GM12878 (cell line): ENCODE measurements at regions of chr14 and their contacts with region 1.

Region 1: GRCh38 chr14:94056579-94057308 is 24.3 kb downstream of the DDX24 start:
- DNase-seq: peak; percentile 37
- ATAC-seq: peak; percentile 81
- H3K4me3 ChIP-seq: no peak overlapping the region
- H3K27ac ChIP-seq: peak overlapping the region; percentile 43; the same call in 1 of the 2 replicates
- H3K4me1 ChIP-seq: peaks cover 26% of the 10 kb centered on the region
- H3K27me3 ChIP-seq: no peaks in the 10 kb centered on the region
- CTCF ChIP-seq: no peak
- EP300 ChIP-seq: 0 out of 4 replicates have a peak, but pooled peaks of 1 of the 2 experiments have one; percentile 22
- POLR2A ChIP-seq: no peak
- RAD21 ChIP-seq: no peak

Region 2: GRCh38 chr14:94080471-94081289 is 23.9 kb after region 1 on chr14 and contains the start of gene DDX24:
- CTCF ChIA-PET with region 1: interaction called, 7 read pairs
- POLR2A ChIA-PET with region 1: interaction called, 14 read pairs
- RAD21 ChIA-PET with region 1: interaction called, 13 read pairs
- SMC1A ChIA-PET with region 1: interaction called, 10 read pairs
- in situ Hi-C with region 1: no loop called
- intact Hi-C with region 1: no loop called
- DNase-seq: peak; percentile 85
- ATAC-seq: peak; percentile 96
- H3K4me3 ChIP-seq: peak within 1 kb of the TSS; percentile 72
- H3K27ac ChIP-seq: peak within 1 kb of the TSS; percentile 96
- H3K4me1 ChIP-seq: peaks cover 3% of the 10 kb centered on the region
- H3K27me3 ChIP-seq: no peaks in the 10 kb centered on the region
- CTCF ChIP-seq: no peak
- EP300 ChIP-seq: no peak
- POLR2A ChIP-seq: peak; percentile 98
- RAD21 ChIP-seq: no peak
- polyA plus RNA-seq, gene DDX24: 137 to 176 TPM